ENCODE measurements at regions of chr16 and their contacts with region 1.

Region 1: DNA sequence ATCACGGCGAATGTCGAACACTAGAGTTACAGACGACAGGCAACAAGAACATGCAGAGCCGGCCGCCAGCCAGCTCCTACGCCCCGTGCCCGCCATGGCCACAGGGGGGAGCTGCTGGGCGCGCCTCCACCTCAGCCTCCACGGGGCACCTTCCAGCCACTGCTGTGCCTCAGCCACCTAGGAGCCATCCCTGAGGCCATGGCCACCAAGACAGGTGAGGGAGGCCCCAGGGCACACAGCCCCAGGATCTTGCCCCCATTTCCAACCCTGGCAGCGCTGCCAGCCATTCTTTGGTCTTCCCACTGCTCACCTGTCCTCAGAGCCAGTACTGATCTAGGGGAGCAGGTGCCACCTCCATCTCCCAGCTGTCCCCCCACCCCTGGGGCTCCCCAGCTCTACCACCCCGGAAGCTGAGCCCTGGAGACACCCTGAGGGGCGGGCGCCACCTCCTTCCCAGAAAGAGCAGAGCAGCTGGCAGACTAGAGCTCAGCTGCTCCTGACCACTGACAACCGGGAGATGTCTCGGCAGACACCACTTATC is 11.8 kb downstream of the GNPTG start:
- DNase-seq: peak; percentile 88
- ATAC-seq: peak; percentile 99
- H3K4me3 Mint-ChIP-seq: no peak overlapping the region
- H3K27ac Mint-ChIP-seq: no peak overlapping the region
- H3K4me1 Mint-ChIP-seq: peaks cover 2% of the 10 kb centered on the region
- H3K27me3 Mint-ChIP-seq: no peaks in the 10 kb centered on the region

Region 2: DNA sequence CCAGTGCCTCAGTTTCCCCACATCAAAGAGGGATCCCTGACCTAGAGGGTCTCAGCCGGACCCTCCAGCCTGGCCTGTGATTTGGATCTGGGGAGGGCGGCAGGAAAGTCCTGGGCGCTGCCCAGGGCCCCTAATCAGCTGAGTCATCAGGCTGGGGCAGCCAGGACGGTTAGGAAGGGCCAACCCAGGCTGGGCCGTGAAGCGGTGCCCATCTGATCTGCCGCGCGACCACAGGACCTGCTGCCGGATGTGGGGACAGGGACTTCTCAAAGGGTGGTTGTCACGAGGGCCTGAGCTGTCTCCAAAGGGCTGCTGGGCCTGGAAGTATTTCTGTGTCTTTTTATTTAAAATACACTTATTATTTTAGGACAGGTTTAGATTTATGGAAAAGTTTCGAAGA is 118.7 kb before region 1 on chr16:
- CTCF ChIA-PET with region 1: no interaction called
- POLR2A ChIA-PET with region 1: no interaction called
- intact Hi-C with region 1: no loop called
- DNase-seq: peak; percentile 36
- ATAC-seq: no peak
- H3K4me3 Mint-ChIP-seq: no peak overlapping the region
- H3K27ac Mint-ChIP-seq: no peak overlapping the region
- H3K4me1 Mint-ChIP-seq: no peaks in the 10 kb centered on the region
- H3K27me3 Mint-ChIP-seq: peaks cover 8% of the 10 kb centered on the region

Region 3: GRCh38 chr16:1413684-1414531 is 50.3 kb after region 1 on chr16:
- CTCF ChIA-PET with region 1: interaction called, 8 read pairs
- POLR2A ChIA-PET with region 1: no interaction called
- intact Hi-C with region 1: loop called in 1 of 2 experiments (anchors 1 kb)
- DNase-seq: peak; percentile 85
- ATAC-seq: peak; percentile 72
- H3K4me3 Mint-ChIP-seq: peak overlapping the region; percentile 81
- H3K27ac Mint-ChIP-seq: peak overlapping the region; percentile 81
- H3K4me1 Mint-ChIP-seq: peaks cover 24% of the 10 kb centered on the region
- H3K27me3 Mint-ChIP-seq: no peaks in the 10 kb centered on the region

Region 4: GRCh38 chr16:1533443-1533951 is 169.9 kb after region 1 on chr16 and contains the start of gene TMEM204:
- CTCF ChIA-PET with region 1: interaction called, 4 read pairs
- POLR2A ChIA-PET with region 1: no interaction called
- intact Hi-C with region 1: loop called in 1 of 2 experiments (anchors 2 kb)
- DNase-seq: peak; percentile 66
- ATAC-seq: peak; percentile 25
- H3K4me3 Mint-ChIP-seq: peak within 1 kb of the TSS; percentile 95
- H3K27ac Mint-ChIP-seq: peak within 1 kb of the TSS; percentile 94
- H3K4me1 Mint-ChIP-seq: peaks cover 39% of the 10 kb centered on the region
- H3K27me3 Mint-ChIP-seq: no peaks in the 10 kb centered on the region
- total RNA-seq, gene TMEM204: 12.6 to 17.5 TPM

Region 5: GRCh38 chr16:1543085-1543896 is 179.7 kb after region 1 on chr16:
- CTCF ChIA-PET with region 1: interaction called, 4 read pairs
- POLR2A ChIA-PET with region 1: no interaction called
- intact Hi-C with region 1: loop called in 1 of 2 experiments (anchors 10 kb)
- DNase-seq: peak; percentile 84
- ATAC-seq: peak; percentile 85
- H3K4me3 Mint-ChIP-seq: peak overlapping the region; percentile 71
- H3K27ac Mint-ChIP-seq: peak overlapping the region; percentile 99
- H3K4me1 Mint-ChIP-seq: peaks cover 78% of the 10 kb centered on the region
- H3K27me3 Mint-ChIP-seq: no peaks in the 10 kb centered on the region

Region 6: GRCh38 chr16:1715220-1715619 is 351.6 kb after region 1 on chr16:
- CTCF ChIA-PET with region 1: no interaction called
- POLR2A ChIA-PET with region 1: no interaction called
- intact Hi-C with region 1: no loop called
- DNase-seq: no peak
- ATAC-seq: no peak
- H3K4me3 Mint-ChIP-seq: no peak overlapping the region
- H3K27ac Mint-ChIP-seq: no peak overlapping the region
- H3K4me1 Mint-ChIP-seq: peaks cover 26% of the 10 kb centered on the region
- H3K27me3 Mint-ChIP-seq: no peaks in the 10 kb centered on the region

Measured in activated CD4-positive, alpha-beta T cell treated with anti-CD3 and anti-CD28 coated beads for 36 hours (primary cell).